Activated naive CD4-positive, alpha-beta T cell treated with anti-CD3 and anti-CD28 coated beads for 36 hours (primary cell): ENCODE measurements at regions of chr5 and their contacts with region 1.

Region 1: GRCh38 chr5:148826053-148826738 is at the start of gene ADRB2:
- DNase-seq: peak; percentile 90
- H3K4me3 Mint-ChIP-seq: peak within 1 kb of the TSS; percentile 78
- H3K27ac Mint-ChIP-seq: peak within 1 kb of the TSS; percentile 10
- H3K4me1 Mint-ChIP-seq: peaks cover 15% of the 10 kb centered on the region
- H3K27me3 Mint-ChIP-seq: peaks cover 23% of the 10 kb centered on the region
- total RNA-seq, gene ADRB2: 0.21 to 0.32 TPM

Region 2: GRCh38 chr5:148740966-148741742 is 85.0 kb before region 1 on chr5:
- CTCF ChIA-PET with region 1: interaction called, 9 read pairs
- intact Hi-C with region 1: loop called (anchors 1 kb)
- DNase-seq: no peak
- H3K4me3 Mint-ChIP-seq: no peak overlapping the region
- H3K27ac Mint-ChIP-seq: no peak overlapping the region
- H3K4me1 Mint-ChIP-seq: no peaks in the 10 kb centered on the region
- H3K27me3 Mint-ChIP-seq: peaks cover 28% of the 10 kb centered on the region

Region 3: DNA sequence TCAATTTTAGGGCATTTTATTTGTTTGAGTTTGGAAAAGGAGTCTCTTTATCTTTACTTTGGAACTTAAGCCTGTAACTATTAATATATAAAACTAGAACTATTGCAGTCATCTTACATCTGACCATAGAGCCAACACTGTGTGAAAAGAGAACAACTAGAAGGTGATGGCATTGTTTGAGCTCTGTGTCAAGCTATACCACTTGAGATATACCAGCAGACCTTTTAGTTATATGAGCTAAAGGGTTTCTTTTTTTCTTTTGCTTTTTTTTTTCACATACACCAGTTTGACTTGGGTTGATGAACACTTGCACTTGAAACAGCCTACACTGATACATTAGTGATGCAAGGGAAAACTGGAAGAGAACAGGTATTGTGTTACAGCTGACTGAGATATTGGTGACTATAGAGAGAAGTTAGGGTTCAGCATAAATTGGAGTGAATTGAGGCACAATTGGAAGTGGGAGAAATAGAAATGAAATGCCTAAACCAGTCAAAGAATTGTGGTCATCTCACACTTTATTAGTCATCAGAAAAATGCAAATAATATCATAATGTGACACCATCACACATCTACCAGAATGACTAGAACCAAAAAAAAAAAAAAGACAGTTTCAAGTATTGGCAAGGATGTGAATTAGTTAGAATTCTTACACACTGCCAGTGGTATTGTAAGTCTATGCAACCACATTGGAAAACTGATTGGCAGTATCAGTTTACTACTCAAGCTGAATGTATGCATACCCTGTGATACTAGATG is 61.1 kb after region 1 on chr5:
- CTCF ChIA-PET with region 1: no interaction called
- intact Hi-C with region 1: loop called (anchors 5 kb)
- DNase-seq: no peak
- H3K4me3 Mint-ChIP-seq: no peak overlapping the region
- H3K27ac Mint-ChIP-seq: no peak overlapping the region
- H3K4me1 Mint-ChIP-seq: peaks cover 3% of the 10 kb centered on the region
- H3K27me3 Mint-ChIP-seq: peaks cover 24% of the 10 kb centered on the region